ENCODE measurements at regions of chr1 and their contacts with region 1.

Region 1: GRCh38 chr1:40257688-40258444 is at the start of gene ZMPSTE24:
- DNase-seq: peak; percentile 93 to 99 (median 95)
- ATAC-seq: peak; percentile 95
- H3K4me3 ChIP-seq: peak within 1 kb of the TSS; percentile 86
- H3K4me3 Mint-ChIP-seq: peak within 1 kb of the TSS; percentile 95
- H3K27ac ChIP-seq: peak within 1 kb of the TSS; percentile 95 to 99
- H3K27ac Mint-ChIP-seq: peak within 1 kb of the TSS; percentile 99
- H3K4me1 ChIP-seq: peaks cover 27% of the 10 kb centered on the region
- H3K4me1 Mint-ChIP-seq: peaks cover 56% of the 10 kb centered on the region
- H3K27me3 ChIP-seq: no peaks in the 10 kb centered on the region
- H3K27me3 Mint-ChIP-seq: no peaks in the 10 kb centered on the region
- CTCF ChIP-seq: no peak
- total RNA-seq, gene ZMPSTE24: 8.7 to 8.8 TPM

Region 2: DNA sequence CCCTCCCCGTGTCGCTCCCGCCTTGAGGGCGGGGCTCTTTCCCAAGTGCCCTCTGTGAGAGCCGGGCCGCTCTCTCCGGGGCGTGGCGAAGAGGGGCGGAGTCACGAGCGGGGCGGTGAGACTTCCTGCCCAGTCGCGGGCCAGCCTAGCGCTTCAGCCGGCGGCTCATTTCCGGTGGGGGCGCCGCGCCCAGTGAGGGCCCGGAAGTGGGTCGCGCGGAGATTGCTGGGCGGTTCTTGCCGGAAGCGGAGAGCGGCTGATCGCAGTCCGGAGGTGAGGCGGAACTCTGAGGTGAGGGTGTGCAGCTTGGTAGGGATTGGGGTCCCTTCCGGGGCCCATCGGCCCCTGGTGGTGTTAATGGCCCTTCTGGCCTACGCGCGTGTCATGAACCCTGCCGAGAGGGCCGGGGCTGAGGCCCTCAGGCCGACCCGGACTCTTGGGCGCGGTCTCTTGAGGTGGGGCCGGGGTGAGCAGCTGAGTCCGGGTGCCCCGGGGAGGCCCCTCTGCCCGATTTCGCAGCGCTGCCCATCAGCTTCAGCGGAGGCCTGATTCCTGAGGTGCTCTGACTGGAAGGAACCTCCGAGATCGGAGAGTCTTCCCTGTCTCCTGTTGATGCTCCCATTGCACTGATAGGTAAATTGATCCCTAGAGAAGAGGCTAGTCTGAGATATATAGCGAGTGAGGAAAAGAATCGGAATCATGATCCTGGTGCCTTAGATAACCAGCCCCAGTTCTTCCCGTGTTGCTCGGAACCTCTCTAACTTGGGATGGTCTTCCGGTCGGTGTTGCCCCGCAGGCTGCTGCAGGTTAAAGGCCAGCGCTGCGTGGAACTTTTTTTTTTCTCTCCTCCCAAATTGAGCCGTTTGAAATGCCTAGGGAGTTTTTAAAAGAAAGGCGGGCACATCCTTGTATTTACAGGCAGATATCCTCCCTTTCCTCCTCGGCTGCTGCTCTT is 217.1 kb before region 1 on chr1 and contains the start of gene CAP1:
- CTCF ChIA-PET with region 1: no interaction called
- POLR2A ChIA-PET with region 1: interaction called, 8 read pairs
- intact Hi-C with region 1: loop called (anchors 2 kb)
- DNase-seq: peak; percentile 99 to 100 (median 100)
- ATAC-seq: peak; percentile 88
- H3K4me3 ChIP-seq: peak within 1 kb of the TSS; percentile 100
- H3K4me3 Mint-ChIP-seq: peak within 1 kb of the TSS; percentile 98
- H3K27ac ChIP-seq: peak within 1 kb of the TSS; percentile 88 to 93
- H3K27ac Mint-ChIP-seq: peak within 1 kb of the TSS; percentile 95
- H3K4me1 ChIP-seq: peaks cover 77% of the 10 kb centered on the region
- H3K4me1 Mint-ChIP-seq: peaks cover 83% of the 10 kb centered on the region
- H3K27me3 ChIP-seq: no peaks in the 10 kb centered on the region
- H3K27me3 Mint-ChIP-seq: no peaks in the 10 kb centered on the region
- CTCF ChIP-seq: no peak
- total RNA-seq, gene CAP1: 121 to 126 TPM

Region 3: DNA sequence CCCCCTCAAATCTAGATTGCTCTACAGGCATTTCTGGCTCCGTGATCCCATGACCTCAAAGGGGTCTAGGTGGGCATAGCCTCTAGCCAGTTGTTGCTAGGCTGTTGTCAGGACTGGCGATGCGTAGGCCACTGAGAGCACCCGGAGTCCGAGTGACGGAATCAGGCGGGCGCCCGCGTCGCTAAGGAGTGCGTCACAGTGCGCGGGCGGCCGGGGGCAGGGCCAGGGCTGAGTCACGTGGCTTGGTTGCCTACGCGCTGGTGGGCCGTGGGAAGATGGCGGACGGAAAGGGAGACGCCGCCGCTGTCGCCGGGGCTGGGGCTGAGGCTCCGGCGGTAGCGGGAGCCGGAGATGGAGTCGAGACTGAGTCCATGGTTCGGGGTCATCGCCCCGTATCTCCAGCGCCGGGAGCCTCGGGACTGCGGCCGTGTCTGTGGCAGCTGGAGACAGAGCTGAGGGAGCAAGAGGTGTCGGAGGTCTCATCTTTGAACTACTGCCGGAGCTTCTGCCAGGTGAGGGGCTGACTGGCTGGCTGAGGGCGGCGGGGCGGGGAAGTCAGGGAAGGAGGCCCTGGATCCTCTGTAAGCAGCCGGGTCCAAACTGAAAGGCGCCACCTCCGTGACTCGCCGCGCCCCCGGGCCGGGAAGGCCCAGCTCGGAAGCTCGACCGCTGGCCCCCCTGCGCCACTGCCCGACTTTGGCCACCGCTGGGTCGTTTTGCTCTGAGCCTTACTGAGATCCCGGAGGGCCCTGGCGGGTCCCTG is 96.6 kb before region 1 on chr1 and contains the start of gene RLF:
- CTCF ChIA-PET with region 1: no interaction called
- POLR2A ChIA-PET with region 1: interaction called, 5 read pairs
- intact Hi-C with region 1: loop called (anchors 1 to 2 kb)
- DNase-seq: peak; percentile 88 to 98 (median 93)
- ATAC-seq: peak; percentile 93
- H3K4me3 ChIP-seq: peak within 1 kb of the TSS; percentile 98
- H3K4me3 Mint-ChIP-seq: no peak within 1 kb of the TSS
- H3K27ac ChIP-seq: peak within 1 kb of the TSS; percentile 87 to 99
- H3K27ac Mint-ChIP-seq: no peak within 1 kb of the TSS
- H3K4me1 ChIP-seq: peaks cover 19% of the 10 kb centered on the region
- H3K4me1 Mint-ChIP-seq: peaks cover 8% of the 10 kb centered on the region
- H3K27me3 ChIP-seq: no peaks in the 10 kb centered on the region
- H3K27me3 Mint-ChIP-seq: no peaks in the 10 kb centered on the region
- CTCF ChIP-seq: no peak
- total RNA-seq, gene RLF: 42.7 to 44.8 TPM

Region 4: GRCh38 chr1:40299366-40300248 is 41.7 kb after region 1 on chr1:
- CTCF ChIA-PET with region 1: no interaction called
- POLR2A ChIA-PET with region 1: no interaction called
- intact Hi-C with region 1: no loop called
- DNase-seq: no peak
- ATAC-seq: no peak
- H3K4me3 ChIP-seq: no peak overlapping the region
- H3K4me3 Mint-ChIP-seq: no peak overlapping the region
- H3K27ac ChIP-seq: no peak overlapping the region
- H3K27ac Mint-ChIP-seq: no peak overlapping the region
- H3K4me1 ChIP-seq: no peaks in the 10 kb centered on the region
- H3K4me1 Mint-ChIP-seq: no peaks in the 10 kb centered on the region
- H3K27me3 ChIP-seq: no peaks in the 10 kb centered on the region
- H3K27me3 Mint-ChIP-seq: no peaks in the 10 kb centered on the region
- CTCF ChIP-seq: no peak

Region 5: DNA sequence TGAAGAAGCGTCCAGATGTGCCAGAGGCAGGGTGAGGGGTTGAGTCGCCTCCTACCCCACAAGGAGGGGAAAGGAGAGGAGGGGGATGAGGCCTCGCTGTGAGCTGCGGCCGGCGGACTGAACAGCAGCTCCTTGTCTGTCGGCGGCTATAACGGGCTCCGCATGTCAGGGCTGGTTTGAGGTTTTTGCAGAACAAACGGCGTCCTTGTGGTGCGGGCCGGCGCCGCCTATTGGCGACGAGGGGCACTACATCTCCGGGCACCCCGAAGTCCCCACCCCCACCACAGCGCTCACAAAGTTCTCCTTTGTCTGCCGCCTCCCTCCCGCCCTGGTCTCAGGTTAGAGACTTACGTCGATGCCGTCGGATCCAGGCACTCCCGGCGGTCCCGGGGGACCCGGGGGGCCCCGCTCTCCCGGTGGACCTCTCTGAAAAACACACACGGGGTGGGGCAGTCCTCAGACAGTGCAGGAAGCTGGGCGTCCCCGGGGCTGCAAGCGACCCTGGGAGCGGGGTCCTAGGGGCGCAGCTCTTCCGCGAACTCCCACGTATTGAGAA is 57.5 kb after region 1 on chr1:
- CTCF ChIA-PET with region 1: interaction called, 5 read pairs
- POLR2A ChIA-PET with region 1: interaction called, 5 read pairs
- intact Hi-C with region 1: loop called (anchors 2 kb)
- DNase-seq: peak; percentile 78 to 94 (median 84)
- ATAC-seq: peak; percentile 84
- H3K4me3 ChIP-seq: peak overlapping the region; percentile 77
- H3K4me3 Mint-ChIP-seq: peak overlapping the region; percentile 90
- H3K27ac ChIP-seq: no peak overlapping the region
- H3K27ac Mint-ChIP-seq: peak overlapping the region; percentile 64
- H3K4me1 ChIP-seq: peaks cover 51% of the 10 kb centered on the region
- H3K4me1 Mint-ChIP-seq: peaks cover 37% of the 10 kb centered on the region
- H3K27me3 ChIP-seq: peaks cover 0 to 11% of the 10 kb centered on the region in 2 experiments
- H3K27me3 Mint-ChIP-seq: peaks cover 24% of the 10 kb centered on the region
- CTCF ChIP-seq: peak; percentile 79

Region 6: DNA sequence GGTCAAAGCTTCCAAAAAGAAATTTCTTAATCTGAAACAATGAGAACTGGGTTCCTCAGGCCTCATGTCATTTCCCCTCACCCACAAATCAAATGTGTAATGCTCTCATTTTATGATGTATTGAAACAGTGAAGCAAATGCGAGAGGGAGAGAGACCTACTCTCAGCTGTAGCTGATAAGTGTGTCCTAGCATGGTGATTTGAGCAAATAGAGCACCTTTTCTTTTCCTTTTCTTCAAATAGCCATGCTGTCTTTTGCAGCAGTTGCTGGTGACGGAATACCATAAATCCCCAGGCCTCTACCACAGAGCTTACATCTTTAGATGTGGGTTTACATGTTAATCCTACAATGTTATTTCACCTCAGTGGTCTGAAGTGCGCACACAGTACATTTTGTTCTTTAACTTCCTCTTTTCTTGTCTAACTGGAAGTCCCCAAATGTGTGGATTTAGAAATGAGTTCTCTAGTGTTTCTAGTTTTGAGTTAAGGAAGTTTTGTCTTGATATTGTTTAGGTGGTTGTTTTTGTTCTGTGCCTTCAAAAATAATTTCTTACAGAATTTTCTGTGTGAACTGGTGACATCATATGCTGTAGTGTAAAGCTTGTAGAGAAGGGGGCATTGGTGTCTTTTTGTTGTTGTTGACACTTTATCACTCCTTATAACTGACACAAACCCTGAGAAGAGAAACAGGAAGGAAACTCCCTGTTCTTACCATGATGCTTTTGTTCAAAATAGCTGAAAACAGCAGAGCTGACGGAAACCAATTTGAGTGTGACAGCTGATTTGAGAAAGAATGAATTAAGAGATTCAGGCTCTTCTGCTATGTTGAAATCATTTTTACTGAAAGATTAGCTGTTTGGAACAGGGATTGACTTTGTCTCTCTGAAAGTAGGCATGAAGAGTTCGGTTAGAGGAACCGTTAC is 127.8 kb after region 1 on chr1:
- CTCF ChIA-PET with region 1: no interaction called
- POLR2A ChIA-PET with region 1: interaction called, 4 read pairs
- intact Hi-C with region 1: loop called in 1 of 2 experiments (anchors 10 kb)
- DNase-seq: peak in 13 of 14 experiments; percentile 19 to 95 (median 49)
- ATAC-seq: peak; percentile 69
- H3K4me3 ChIP-seq: peak overlapping the region; percentile 42
- H3K4me3 Mint-ChIP-seq: peak overlapping the region; percentile 83
- H3K27ac ChIP-seq: peak overlapping the region; percentile 92 to 95
- H3K27ac Mint-ChIP-seq: peak overlapping the region; percentile 96
- H3K4me1 ChIP-seq: peaks cover 86% of the 10 kb centered on the region
- H3K4me1 Mint-ChIP-seq: peaks cover 87% of the 10 kb centered on the region
- H3K27me3 ChIP-seq: no peaks in the 10 kb centered on the region
- H3K27me3 Mint-ChIP-seq: no peaks in the 10 kb centered on the region
- CTCF ChIP-seq: no peak